ENCODE measurements at regions of chrX and their contacts with region 1.

Region 1: GRCh38 chrX:130091958-130092522 is 18.3 kb downstream of the ELF4 start:
- DNase-seq: peak; percentile 84
- H3K4me3 Mint-ChIP-seq: peak overlapping the region; percentile 90
- H3K27ac Mint-ChIP-seq: peak overlapping the region; percentile 95
- H3K4me1 Mint-ChIP-seq: peaks cover 34% of the 10 kb centered on the region
- H3K27me3 Mint-ChIP-seq: no peaks in the 10 kb centered on the region

Region 2: GRCh38 chrX:130110379-130111219 is 18.6 kb after region 1 on chrX and contains the start of gene ELF4:
- intact Hi-C with region 1: loop called (anchors 1 kb)
- DNase-seq: peak; percentile 29
- H3K4me3 Mint-ChIP-seq: peak within 1 kb of the TSS; percentile 94
- H3K27ac Mint-ChIP-seq: peak within 1 kb of the TSS; percentile 84
- H3K4me1 Mint-ChIP-seq: peaks cover 34% of the 10 kb centered on the region
- H3K27me3 Mint-ChIP-seq: no peaks in the 10 kb centered on the region
- total RNA-seq, gene ELF4: 31.8 and 33.6 TPM in 2 replicates

Region 3: GRCh38 chrX:130497531-130497930 is 405.5 kb after region 1 on chrX:
- intact Hi-C with region 1: no loop called
- DNase-seq: no peak
- H3K4me3 Mint-ChIP-seq: no peak overlapping the region
- H3K27ac Mint-ChIP-seq: no peak overlapping the region
- H3K4me1 Mint-ChIP-seq: no peaks in the 10 kb centered on the region
- H3K27me3 Mint-ChIP-seq: peaks cover 3% of the 10 kb centered on the region

Region 4: GRCh38 chrX:130772105-130772775 is 680.2 kb after region 1 on chrX:
- intact Hi-C with region 1: no loop called
- DNase-seq: no peak
- H3K4me3 Mint-ChIP-seq: no peak overlapping the region
- H3K27ac Mint-ChIP-seq: no peak overlapping the region
- H3K4me1 Mint-ChIP-seq: peaks cover 23% of the 10 kb centered on the region
- H3K27me3 Mint-ChIP-seq: no peaks in the 10 kb centered on the region